Right cardiac atrium (tissue), 5 donors: ENCODE measurements at regions of chr11 and their contacts with region 1.

Region 1: GRCh38 chr11:116454020-116454645 is 318.7 kb downstream of the BUD13 start:
- DNase-seq: peak; percentile 19 to 56 (median 51)
- ATAC-seq: peak; percentile 40 to 48
- H3K4me3 ChIP-seq: no peak overlapping the region
- H3K27ac ChIP-seq: no peak overlapping the region
- H3K4me1 ChIP-seq: no peaks in the 10 kb centered on the region
- H3K27me3 ChIP-seq: no peaks in the 10 kb centered on the region

Region 2: DNA sequence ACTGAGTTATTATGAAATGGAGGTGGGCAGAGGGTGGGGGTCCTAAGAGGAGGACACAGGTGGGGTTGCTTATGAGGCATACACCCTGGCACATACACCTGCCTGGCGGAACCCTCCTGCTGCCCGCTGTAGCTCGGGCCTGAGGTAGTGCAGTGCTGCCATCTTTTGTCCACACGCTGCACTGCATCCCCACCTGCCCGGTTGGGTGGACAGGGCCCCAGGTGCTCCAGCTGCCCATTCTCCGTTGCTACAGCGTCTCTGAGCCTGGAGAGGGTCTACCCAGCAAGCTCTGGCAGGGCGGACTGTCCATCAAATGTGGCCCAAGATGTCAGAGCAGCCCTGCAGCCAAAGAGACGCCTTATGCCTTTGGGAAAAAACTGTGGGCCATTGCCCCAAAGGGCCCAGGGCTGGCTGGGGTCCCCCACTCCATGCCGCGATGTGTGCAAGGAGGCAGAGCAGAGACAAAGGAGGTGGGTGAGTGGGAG is 187.5 kb after region 1 on chr11:
- intact Hi-C with region 1: loop called in 3 of 4 experiments (anchors 10 kb)
- DNase-seq: peak in 1 of 3 donors; percentile 65
- ATAC-seq: peak; percentile 63 to 70
- H3K4me3 ChIP-seq: no peak overlapping the region
- H3K27ac ChIP-seq: no peak overlapping the region
- H3K4me1 ChIP-seq: no peaks in the 10 kb centered on the region
- H3K27me3 ChIP-seq: no peaks in the 10 kb centered on the region

Region 3: DNA sequence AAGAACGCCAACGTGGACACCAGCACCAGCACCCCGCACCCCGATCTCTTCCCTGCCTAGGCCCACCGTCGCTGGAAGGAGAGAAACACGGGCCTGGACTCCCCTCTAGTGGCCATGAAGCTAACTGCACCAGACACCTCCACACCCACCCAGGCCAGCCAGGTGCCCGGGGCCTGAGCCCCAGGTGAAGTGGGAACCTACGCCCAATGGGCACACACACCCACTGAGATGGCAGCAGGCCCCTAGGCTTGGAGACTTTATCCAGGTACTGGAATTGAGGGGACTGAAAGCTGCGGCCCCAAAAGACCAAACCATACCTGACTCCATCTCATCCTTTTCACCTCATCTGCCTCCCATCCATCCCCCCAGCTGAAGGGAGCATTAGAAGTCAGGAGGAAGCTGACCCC is 237.6 kb after region 1 on chr11:
- intact Hi-C with region 1: loop called in 1 of 4 experiments (anchors 5 kb)
- DNase-seq: peak in 2 of 3 donors; percentile 65 to 76
- ATAC-seq: peak; percentile 47 to 73
- H3K4me3 ChIP-seq: no peak overlapping the region
- H3K27ac ChIP-seq: no peak overlapping the region
- H3K4me1 ChIP-seq: no peaks in the 10 kb centered on the region
- H3K27me3 ChIP-seq: no peaks in the 10 kb centered on the region